Activated CD8-positive, alpha-beta T cell treated with anti-CD3 and anti-CD28 coated beads for 36 hours (primary cell): ENCODE measurements at regions of chr12 and their contacts with region 1.

Region 1: DNA sequence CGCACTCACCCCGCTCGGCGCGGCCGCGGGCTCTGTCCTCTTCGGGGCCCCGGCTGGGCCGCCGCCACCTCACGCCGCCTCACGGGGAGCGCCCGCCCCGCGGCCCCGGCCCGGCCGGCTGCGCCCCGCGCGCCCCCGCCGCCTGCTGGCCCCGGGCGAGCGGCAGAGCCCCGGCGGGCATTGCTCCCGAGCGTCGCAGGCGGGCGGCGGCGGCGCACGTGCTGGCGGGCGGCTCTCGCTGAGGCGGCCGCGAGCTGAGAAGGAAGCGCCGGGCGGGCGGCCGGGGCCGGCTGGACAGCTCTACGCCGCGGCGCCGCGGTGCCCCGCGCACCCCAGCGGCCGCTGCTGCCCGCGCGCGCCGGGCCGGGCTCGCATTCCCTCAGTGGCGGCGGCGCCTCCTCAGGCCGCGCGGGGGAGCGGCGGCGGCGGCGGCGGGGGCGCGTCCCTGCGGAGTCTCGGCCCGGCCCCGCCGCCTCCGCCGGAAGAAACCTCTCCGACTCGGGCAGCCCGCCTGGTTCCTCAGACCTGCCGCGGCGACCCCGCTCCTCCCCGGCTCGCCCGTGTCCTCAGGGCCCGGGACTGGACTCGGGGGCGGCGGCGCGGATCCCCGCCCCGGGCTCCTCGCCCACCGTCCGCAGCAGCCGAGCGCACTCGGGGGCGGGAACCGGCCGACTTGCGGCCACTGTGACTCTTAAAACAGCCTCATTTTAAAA is at the start of gene PITPNM2:
- DNase-seq: peak; percentile 64
- ATAC-seq: peak; percentile 82
- H3K4me3 Mint-ChIP-seq: peak within 1 kb of the TSS; percentile 76
- H3K27ac Mint-ChIP-seq: peak within 1 kb of the TSS; percentile 87
- H3K4me1 Mint-ChIP-seq: peaks cover 30% of the 10 kb centered on the region
- H3K27me3 Mint-ChIP-seq: no peaks in the 10 kb centered on the region
- CTCF ChIP-seq: no peak
- total RNA-seq, gene PITPNM2: 15.3 to 17.9 TPM

Region 2: GRCh38 chr12:122974274-122974891 is 176.5 kb before region 1 on chr12:
- CTCF ChIA-PET with region 1: no interaction called
- POLR2A ChIA-PET with region 1: interaction called, 3 read pairs
- intact Hi-C with region 1: loop called (anchors 10 kb)
- DNase-seq: peak; percentile 99
- ATAC-seq: peak; percentile 85
- H3K4me3 Mint-ChIP-seq: peak overlapping the region; percentile 95
- H3K27ac Mint-ChIP-seq: peak overlapping the region; percentile 100
- H3K4me1 Mint-ChIP-seq: peaks cover 26% of the 10 kb centered on the region
- H3K27me3 Mint-ChIP-seq: no peaks in the 10 kb centered on the region
- CTCF ChIP-seq: no peak

Region 3: DNA sequence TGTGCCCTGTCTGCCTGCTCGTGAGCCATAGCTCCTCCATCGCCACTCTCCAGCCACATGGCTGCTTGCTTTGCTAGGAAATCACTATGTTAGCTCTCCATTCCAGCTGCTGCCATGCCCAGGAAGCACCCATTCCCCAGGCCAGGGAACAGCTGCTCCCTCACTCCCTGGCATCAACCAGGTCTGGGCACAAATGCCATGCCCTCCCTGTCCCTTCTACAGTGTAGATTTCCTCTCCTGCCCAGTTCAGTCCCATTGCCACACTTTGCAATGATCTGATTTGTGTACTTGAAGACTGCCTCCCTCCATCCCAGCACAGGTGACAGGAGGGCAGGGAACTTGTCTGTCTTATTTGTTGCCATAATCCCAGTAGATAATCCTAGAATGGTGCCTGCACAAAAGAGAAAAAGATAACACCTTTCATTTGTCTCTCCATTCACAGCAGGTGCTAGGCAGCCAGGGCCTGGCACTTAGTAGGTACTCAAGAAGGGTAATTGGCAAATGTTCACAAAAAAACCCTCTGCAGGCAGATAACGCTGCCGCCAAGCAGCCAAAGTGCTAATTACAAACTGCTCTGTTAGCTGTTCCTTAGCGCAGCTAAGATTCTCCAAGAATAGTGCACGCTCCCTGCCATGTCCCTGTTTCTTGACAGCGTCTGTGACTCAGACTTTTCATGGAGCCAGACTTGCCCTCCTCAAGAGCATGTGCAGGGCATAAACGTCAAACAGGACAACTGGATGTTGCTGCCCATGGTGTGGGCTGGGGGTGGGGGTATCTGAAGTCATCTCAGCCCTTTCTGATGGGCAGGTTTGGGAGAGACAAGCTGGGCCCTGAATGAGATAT is 101.3 kb before region 1 on chr12:
- CTCF ChIA-PET with region 1: interaction called, 17 read pairs
- POLR2A ChIA-PET with region 1: no interaction called
- intact Hi-C with region 1: loop called (anchors 5 kb)
- DNase-seq: no peak
- ATAC-seq: no peak
- H3K4me3 Mint-ChIP-seq: no peak overlapping the region
- H3K27ac Mint-ChIP-seq: no peak overlapping the region
- H3K4me1 Mint-ChIP-seq: peaks cover 35% of the 10 kb centered on the region
- H3K27me3 Mint-ChIP-seq: no peaks in the 10 kb centered on the region
- CTCF ChIP-seq: no peak